ENCODE measurements at regions of chr20 and their contacts with region 1.

Region 1: GRCh38 chr20:54062812-54063280 is 7.5 kb downstream of the BCAS1 start:
- DNase-seq: peak; percentile 70
- ATAC-seq: peak; percentile 64
- H3K4me3 ChIP-seq: no peak overlapping the region
- H3K27ac ChIP-seq: no peak overlapping the region
- H3K4me1 ChIP-seq: peaks cover 16% of the 10 kb centered on the region
- H3K27me3 ChIP-seq: no peaks in the 10 kb centered on the region; a peak in 1 of 5 replicates
- CTCF ChIP-seq: peak; percentile 91
- EP300 ChIP-seq: no peak
- POLR2A ChIP-seq: no peak
- RAD21 ChIP-seq: peak; percentile 80

Region 2: DNA sequence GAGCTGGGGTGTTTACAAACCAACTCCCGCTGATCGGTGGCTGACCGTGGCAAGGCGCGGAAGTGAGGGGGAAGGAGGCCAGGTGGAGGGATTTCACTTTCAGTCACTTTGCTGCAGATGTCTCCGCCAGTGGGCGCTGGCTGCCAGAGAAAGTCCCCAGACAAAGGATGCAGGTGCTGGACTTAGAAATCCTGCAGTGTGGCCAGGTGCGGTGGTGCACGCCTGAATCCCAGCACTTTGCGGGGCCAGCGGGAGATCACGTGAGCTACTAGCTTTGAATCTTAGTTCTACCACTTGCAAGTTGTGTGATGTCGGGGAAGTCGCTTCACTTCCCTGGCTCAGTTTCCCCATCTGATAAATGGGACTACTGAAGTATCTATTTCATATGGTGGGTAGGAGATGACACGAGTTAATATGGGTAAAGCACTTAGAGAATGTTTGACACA is 649.6 kb before region 1 on chr20:
- CTCF ChIA-PET with region 1: interaction called, 5 read pairs
- POLR2A ChIA-PET with region 1: no interaction called
- in situ Hi-C with region 1: no loop called
- intact Hi-C with region 1: loop called (anchors 1 kb)
- DNase-seq: peak; percentile 83
- ATAC-seq: peak; percentile 96
- H3K4me3 ChIP-seq: peak overlapping the region in 1 of 3 experiments; percentile 20; a peak in 3 of 6 replicates
- H3K27ac ChIP-seq: no peak overlapping the region
- H3K4me1 ChIP-seq: no peaks in the 10 kb centered on the region
- H3K27me3 ChIP-seq: no peaks in the 10 kb centered on the region
- CTCF ChIP-seq: peak; percentile 98
- EP300 ChIP-seq: no peak
- POLR2A ChIP-seq: no peak
- RAD21 ChIP-seq: peak; percentile 98

Region 3: DNA sequence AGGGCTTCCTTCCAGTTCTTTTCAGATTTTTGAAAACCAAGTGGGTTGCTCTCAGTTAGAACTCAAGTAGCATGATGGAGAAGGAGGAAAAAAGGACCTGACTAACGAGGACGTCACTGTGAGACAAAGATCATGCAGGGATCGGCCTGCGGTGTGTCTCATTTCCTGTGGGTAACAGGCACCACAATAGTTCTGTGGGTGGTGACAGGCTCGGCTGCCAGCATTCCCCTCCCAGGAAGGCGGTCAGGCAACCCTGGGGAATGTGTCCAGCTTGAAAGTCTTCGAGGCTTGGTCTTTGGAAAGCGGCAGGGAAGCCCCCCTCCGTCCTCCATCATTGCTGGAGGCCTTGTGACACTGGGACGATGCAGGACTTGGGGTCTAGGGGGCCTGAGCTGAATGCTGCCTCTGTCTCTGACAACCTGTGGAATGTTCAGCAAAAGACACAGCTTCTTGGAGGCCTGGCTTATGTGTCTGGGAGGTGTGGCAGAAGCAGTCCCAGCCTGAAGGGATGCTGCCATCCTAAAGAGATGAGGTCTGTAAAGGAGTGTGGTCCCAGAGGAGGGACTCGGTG is 113.4 kb before region 1 on chr20:
- CTCF ChIA-PET with region 1: no interaction called
- POLR2A ChIA-PET with region 1: interaction called, 4 read pairs
- in situ Hi-C with region 1: loop called (anchors 5 kb)
- intact Hi-C with region 1: no loop called
- DNase-seq: no peak
- ATAC-seq: peak; percentile 54
- H3K4me3 ChIP-seq: no peak overlapping the region
- H3K27ac ChIP-seq: no peak overlapping the region
- H3K4me1 ChIP-seq: peaks cover 38% of the 10 kb centered on the region
- H3K27me3 ChIP-seq: no peaks in the 10 kb centered on the region
- CTCF ChIP-seq: no peak
- EP300 ChIP-seq: no peak
- POLR2A ChIP-seq: no peak
- RAD21 ChIP-seq: no peak

Region 4: GRCh38 chr20:54086483-54087039 is 23.7 kb after region 1 on chr20:
- CTCF ChIA-PET with region 1: no interaction called
- POLR2A ChIA-PET with region 1: interaction called, 16 read pairs
- in situ Hi-C with region 1: no loop called
- intact Hi-C with region 1: no loop called
- DNase-seq: no peak
- ATAC-seq: no peak; the same call in 2 of the 3 replicates
- H3K4me3 ChIP-seq: no peak overlapping the region
- H3K27ac ChIP-seq: no peak overlapping the region
- H3K4me1 ChIP-seq: peaks cover 31% of the 10 kb centered on the region
- H3K27me3 ChIP-seq: peaks cover 0 to 6% of the 10 kb centered on the region in 2 experiments; a peak in 2 of 5 replicates
- CTCF ChIP-seq: no peak
- EP300 ChIP-seq: no peak
- POLR2A ChIP-seq: no peak
- RAD21 ChIP-seq: no peak

Region 5: DNA sequence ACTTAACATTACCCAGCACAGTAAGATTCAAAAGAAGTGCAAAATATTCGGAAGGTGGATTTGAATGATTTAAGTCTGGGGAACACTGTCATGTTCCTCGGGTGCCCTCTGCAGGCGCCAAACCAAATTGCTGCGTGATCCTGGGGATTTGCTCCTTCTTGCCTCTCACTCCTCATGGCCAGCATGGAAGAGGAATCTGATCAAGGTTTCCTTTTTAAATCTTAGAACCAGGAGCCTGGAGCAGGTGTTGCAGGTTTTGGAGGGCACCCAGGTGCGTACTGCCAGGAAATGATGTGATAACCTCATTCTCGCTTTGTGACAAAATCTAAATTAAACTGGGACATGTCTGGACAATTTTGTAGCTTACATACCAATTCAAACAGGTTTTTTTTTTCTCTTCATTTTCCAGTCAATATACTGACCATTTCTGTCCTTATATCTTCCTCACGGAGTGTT is 136.9 kb after region 1 on chr20:
- CTCF ChIA-PET with region 1: interaction called, 5 read pairs
- POLR2A ChIA-PET with region 1: interaction called, 11 read pairs
- in situ Hi-C with region 1: no loop called
- intact Hi-C with region 1: no loop called
- DNase-seq: peak; percentile 82
- ATAC-seq: no peak
- H3K4me3 ChIP-seq: no peak overlapping the region
- H3K27ac ChIP-seq: no peak overlapping the region
- H3K4me1 ChIP-seq: peaks cover 51% of the 10 kb centered on the region
- H3K27me3 ChIP-seq: peaks cover 0 to 11% of the 10 kb centered on the region in 2 experiments; a peak in 1 of 5 replicates
- CTCF ChIP-seq: peak; percentile 95
- EP300 ChIP-seq: no peak
- POLR2A ChIP-seq: no peak
- RAD21 ChIP-seq: peak; percentile 97

Region 6: GRCh38 chr20:54227241-54227640 is 164.4 kb after region 1 on chr20:
- CTCF ChIA-PET with region 1: no interaction called
- POLR2A ChIA-PET with region 1: no interaction called
- in situ Hi-C with region 1: no loop called
- intact Hi-C with region 1: no loop called
- DNase-seq: no peak
- ATAC-seq: no peak
- H3K4me3 ChIP-seq: no peak overlapping the region
- H3K27ac ChIP-seq: no peak overlapping the region
- H3K4me1 ChIP-seq: peaks cover 8% of the 10 kb centered on the region
- H3K27me3 ChIP-seq: no peaks in the 10 kb centered on the region
- CTCF ChIP-seq: no peak
- EP300 ChIP-seq: no peak
- POLR2A ChIP-seq: no peak
- RAD21 ChIP-seq: no peak